ENCODE measurements at regions of chr2 and their contacts with region 1.

Region 1: DNA sequence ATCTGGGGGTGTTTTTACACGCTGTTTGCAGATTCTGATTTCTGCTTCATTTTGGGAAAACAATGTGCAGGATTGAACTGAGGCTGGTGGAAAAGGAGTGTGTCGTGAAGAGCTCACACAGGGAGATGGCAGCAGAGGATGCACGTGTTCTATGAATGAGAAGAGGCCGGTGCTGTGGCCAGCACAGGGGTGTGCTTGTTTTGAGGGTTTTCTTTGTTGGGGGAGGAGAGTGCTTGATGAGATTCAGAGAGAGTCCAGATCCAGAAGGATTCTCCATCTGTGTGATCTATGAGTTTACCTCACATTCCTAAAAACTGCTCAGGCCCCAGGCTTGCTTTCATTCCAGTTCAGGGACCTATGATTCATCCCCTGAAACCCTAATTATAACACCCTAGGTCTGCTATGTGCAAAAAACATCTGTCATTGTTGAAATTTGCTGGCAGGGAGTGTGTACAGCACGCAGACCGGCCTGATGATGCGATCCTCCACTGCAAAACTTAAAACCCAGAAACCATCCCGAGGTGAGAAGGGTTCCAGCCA is 12.1 kb downstream of the TGFA start:
- DNase-seq: peak in 7 of 10 donors; percentile 30 to 90 (median 53)

Region 2: DNA sequence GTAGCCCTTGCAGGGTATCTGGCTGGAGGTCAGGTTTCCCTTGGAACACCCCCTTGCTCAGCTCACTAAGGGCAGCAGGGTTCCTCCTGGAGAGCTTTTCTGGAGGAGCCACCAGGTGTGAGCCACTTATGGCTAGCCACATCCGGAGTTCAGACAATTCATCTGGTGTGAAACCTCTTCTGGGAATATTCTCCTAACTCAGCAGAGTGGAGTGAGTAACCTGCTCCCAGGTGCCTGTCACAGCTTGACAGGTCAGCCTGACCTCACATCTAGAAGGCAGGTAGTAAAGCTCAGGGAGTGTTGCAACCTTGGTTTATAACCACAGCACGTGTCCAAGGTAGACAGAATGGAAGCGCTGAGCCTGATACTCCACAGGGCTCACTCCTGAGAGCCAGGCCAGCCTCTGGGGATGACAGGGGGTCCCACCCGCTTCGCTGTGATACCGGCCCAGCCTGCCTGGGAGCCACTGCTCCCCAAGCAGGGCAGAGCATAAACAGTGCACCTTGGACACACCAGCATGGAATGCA is 74.7 kb after region 1 on chr2:
- intact Hi-C with region 1: loop called (anchors 1 kb)
- DNase-seq: no peak

Region 3: GRCh38 chr2:70726947-70727725 is 185.6 kb after region 1 on chr2:
- intact Hi-C with region 1: no loop called
- DNase-seq: no peak

Measured in posterior cingulate gyrus (tissue), 11 donors.